H1 (cell line): ENCODE measurements at regions of chr16 and their contacts with region 1.

Region 1: GRCh38 chr16:67326472-67327309 is at the starts of genes KCTD19 and LRRC36:
- DNase-seq: peak; percentile 73 to 100
- H3K4me3 ChIP-seq: peak within 1 kb of the TSS; percentile 36 to 68 (median 52)
- H3K27ac ChIP-seq: no peak within 1 kb of the TSS
- H3K4me1 ChIP-seq: no peaks in the 10 kb centered on the region; a peak in 1 of 7 replicates
- H3K27me3 ChIP-seq: peaks cover 0 to 4% (median under 1%) of the 10 kb centered on the region in 4 experiments; a peak in 3 of 7 replicates
- CTCF ChIP-seq: peak; percentile 75 to 90 (median 78)
- EP300 ChIP-seq: no peak
- POLR2A ChIP-seq: no peak
- RAD21 ChIP-seq: peak; percentile 53 to 59
- total RNA-seq, gene KCTD19: 0.06 and 0.63 TPM in 2 replicates
- total RNA-seq, gene LRRC36: 0.44 TPM in 1 of 2 replicates, not detected in the other

Region 2: GRCh38 chr16:67339453-67339852 is 12.8 kb after region 1 on chr16:
- CTCF ChIA-PET with region 1: interaction called, 10 read pairs
- POLR2A ChIA-PET with region 1: interaction called, 4 read pairs
- DNase-seq: no peak
- H3K4me3 ChIP-seq: no peak overlapping the region
- H3K27ac ChIP-seq: no peak overlapping the region
- H3K4me1 ChIP-seq: no peaks in the 10 kb centered on the region
- H3K27me3 ChIP-seq: no peaks in the 10 kb centered on the region
- CTCF ChIP-seq: no peak
- EP300 ChIP-seq: no peak
- POLR2A ChIP-seq: no peak
- RAD21 ChIP-seq: peak; percentile 42 to 52

Region 3: DNA sequence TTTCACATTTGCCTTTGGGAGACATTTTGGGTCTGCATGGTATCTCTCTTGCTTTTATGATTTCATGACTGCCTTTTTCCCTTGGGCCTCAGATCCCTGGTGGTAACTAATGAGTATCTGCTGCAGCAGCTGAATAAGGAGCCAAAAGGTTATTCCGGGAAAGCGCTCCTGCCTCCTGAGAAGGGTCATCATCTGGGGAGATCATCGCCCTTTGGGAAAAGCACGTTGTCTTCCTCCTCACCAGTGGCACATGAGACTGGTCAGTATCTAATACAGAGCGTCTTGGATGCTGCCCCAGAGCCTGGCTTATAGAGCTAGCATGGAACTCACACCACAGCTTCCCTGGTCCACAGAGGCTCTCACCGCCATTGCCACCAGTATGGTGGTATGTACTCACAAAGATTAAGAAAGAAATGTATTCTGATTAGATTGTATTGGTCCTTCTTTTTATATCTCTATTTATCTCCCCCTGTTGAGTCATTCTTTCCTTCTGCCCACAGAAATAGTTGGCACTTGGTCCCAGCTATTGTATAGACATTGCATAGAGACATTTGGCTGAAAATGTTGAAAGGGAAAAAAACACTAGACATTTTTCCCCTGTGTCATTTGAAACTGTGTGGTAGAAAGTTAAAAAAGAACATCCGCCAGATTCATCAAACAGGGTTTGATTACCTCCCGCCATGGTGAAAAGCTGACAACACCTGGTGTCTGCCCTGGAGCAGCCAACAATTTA is 58.3 kb after region 1 on chr16:
- CTCF ChIA-PET with region 1: interaction called, 10 read pairs
- POLR2A ChIA-PET with region 1: no interaction called
- DNase-seq: no peak
- H3K4me3 ChIP-seq: no peak overlapping the region
- H3K27ac ChIP-seq: no peak overlapping the region
- H3K4me1 ChIP-seq: peaks cover 0 to 12% (median 4%) of the 10 kb centered on the region in 4 experiments; a peak in 5 of 7 replicates
- H3K27me3 ChIP-seq: peaks cover 0 to 3% (median 0%) of the 10 kb centered on the region in 4 experiments; a peak in 1 of 7 replicates
- CTCF ChIP-seq: no peak
- EP300 ChIP-seq: no peak
- POLR2A ChIP-seq: no peak
- RAD21 ChIP-seq: no peak